ENCODE measurements at regions of chr1 and their contacts with region 1.

Region 1: DNA sequence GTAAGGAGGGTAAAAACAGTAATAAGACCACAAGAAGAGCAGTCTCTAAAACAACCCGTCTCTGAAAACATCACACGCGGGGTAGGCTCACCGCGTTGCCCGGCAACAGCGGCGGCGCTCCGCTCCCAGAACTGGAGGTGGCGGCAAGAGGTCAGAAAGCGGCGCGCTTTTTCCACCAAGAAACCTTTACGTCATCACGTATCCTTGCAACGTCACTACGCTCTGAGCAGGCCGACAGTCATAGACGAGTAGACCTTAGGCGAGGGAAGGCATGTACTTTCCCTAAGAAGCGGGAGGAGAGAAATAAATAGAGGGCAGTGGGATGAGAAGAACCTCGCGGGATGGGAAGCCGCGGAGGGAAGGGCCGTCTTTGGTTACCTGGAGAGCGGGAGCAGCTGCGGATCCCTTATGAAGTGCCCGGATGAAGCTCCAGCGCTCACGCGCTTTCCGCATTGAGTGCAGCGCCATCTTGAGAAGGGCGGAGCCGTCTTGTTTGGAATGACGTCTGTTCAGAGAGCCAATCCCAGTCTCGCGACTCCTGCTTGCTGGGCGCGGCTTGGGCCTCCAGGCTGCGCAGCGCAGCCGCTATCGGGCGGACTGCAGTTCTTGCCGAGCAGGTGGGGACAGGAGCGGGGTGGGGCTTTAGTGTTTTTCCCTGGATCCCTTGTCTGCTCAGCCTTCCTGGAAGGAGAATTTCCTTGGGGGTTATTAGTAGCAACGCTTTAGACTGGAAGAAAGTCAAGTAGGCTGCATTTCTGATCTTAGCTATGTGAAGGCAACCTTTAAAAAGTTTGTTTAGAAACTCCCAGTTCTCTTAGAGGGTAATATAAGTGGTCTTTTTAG is at the start of gene WARS2:
- DNase-seq: peak; percentile 99
- H3K4me3 ChIP-seq: peak within 1 kb of the TSS; percentile 42 to 61 (median 56)
- H3K27ac ChIP-seq: peak within 1 kb of the TSS; percentile 90 to 94 (median 92)
- H3K4me1 ChIP-seq: peaks cover 0 to 22% (median 12%) of the 10 kb centered on the region in 4 donors
- H3K27me3 ChIP-seq: no peaks in the 10 kb centered on the region
- CTCF ChIP-seq: no peak
- EP300 ChIP-seq: peak in 2 of 4 donors; percentile 3 to 44
- POLR2A ChIP-seq: peak; percentile 46 to 76
- total RNA-seq, gene WARS2: 10.7 to 18.8 (median 14.5) TPM

Region 2: GRCh38 chr1:118987468-118988185 is 152.8 kb before region 1 on chr1:
- intact Hi-C with region 1: loop called (anchors 10 kb)
- DNase-seq: no peak
- H3K4me3 ChIP-seq: peak overlapping the region; percentile 13 to 41 (median 27)
- H3K27ac ChIP-seq: no peak overlapping the region
- H3K4me1 ChIP-seq: peaks cover 0 to 45% (median 38%) of the 10 kb centered on the region in 4 donors
- H3K27me3 ChIP-seq: peaks cover 94 to 100% (median 98%) of the 10 kb centered on the region in 3 donors
- CTCF ChIP-seq: no peak
- EP300 ChIP-seq: no peak
- POLR2A ChIP-seq: no peak

Region 3: GRCh38 chr1:119112791-119113190 is 27.6 kb before region 1 on chr1:
- intact Hi-C with region 1: loop called (anchors 2 kb)
- DNase-seq: no peak
- H3K4me3 ChIP-seq: no peak overlapping the region
- H3K27ac ChIP-seq: peak overlapping the region in 3 of 4 donors; percentile 54 to 64 (median 63)
- H3K4me1 ChIP-seq: peaks cover 0 to 21% (median 14%) of the 10 kb centered on the region in 4 donors
- H3K27me3 ChIP-seq: no peaks in the 10 kb centered on the region
- CTCF ChIP-seq: no peak
- EP300 ChIP-seq: no peak
- POLR2A ChIP-seq: no peak

Region 4: GRCh38 chr1:119327436-119328155 is 187.2 kb after region 1 on chr1:
- intact Hi-C with region 1: loop called (anchors 5 kb)
- DNase-seq: peak; percentile 96
- H3K4me3 ChIP-seq: peak overlapping the region; percentile 30 to 51 (median 44)
- H3K27ac ChIP-seq: peak overlapping the region in 3 of 4 donors; percentile 73 to 80 (median 74)
- H3K4me1 ChIP-seq: peaks cover 0 to 58% (median 45%) of the 10 kb centered on the region in 4 donors
- H3K27me3 ChIP-seq: no peaks in the 10 kb centered on the region
- CTCF ChIP-seq: peak in 1 of 4 experiments; percentile 18
- EP300 ChIP-seq: peak; percentile 50 to 89 (median 75)
- POLR2A ChIP-seq: no peak